Naive thymus-derived CD4-positive, alpha-beta T cell (primary cell): ENCODE measurements at regions of chr11 and their contacts with region 1.

Region 1: GRCh38 chr11:126062679-126063506 is at the start of gene CDON:
- DNase-seq: peak; percentile 88 to 97 (median 93)
- ATAC-seq: peak; percentile 92
- H3K4me3 ChIP-seq: peak within 1 kb of the TSS; percentile 83
- H3K4me3 Mint-ChIP-seq: peak within 1 kb of the TSS; percentile 79 to 93 (median 92)
- H3K27ac ChIP-seq: peak within 1 kb of the TSS; percentile 76
- H3K27ac Mint-ChIP-seq: peak within 1 kb of the TSS; percentile 79 to 98 (median 97)
- H3K4me1 ChIP-seq: peaks cover 4 to 5% of the 10 kb centered on the region in 2 donors
- H3K4me1 Mint-ChIP-seq: peaks cover 5 to 17% (median 7%) of the 10 kb centered on the region in 7 donors
- H3K27me3 ChIP-seq: no peaks in the 10 kb centered on the region
- H3K27me3 Mint-ChIP-seq: peaks cover 0 to 56% (median 5%) of the 10 kb centered on the region in 5 donors
- total RNA-seq, gene CDON: 1.5 to 4.8 (median 2.3) TPM

Region 2: DNA sequence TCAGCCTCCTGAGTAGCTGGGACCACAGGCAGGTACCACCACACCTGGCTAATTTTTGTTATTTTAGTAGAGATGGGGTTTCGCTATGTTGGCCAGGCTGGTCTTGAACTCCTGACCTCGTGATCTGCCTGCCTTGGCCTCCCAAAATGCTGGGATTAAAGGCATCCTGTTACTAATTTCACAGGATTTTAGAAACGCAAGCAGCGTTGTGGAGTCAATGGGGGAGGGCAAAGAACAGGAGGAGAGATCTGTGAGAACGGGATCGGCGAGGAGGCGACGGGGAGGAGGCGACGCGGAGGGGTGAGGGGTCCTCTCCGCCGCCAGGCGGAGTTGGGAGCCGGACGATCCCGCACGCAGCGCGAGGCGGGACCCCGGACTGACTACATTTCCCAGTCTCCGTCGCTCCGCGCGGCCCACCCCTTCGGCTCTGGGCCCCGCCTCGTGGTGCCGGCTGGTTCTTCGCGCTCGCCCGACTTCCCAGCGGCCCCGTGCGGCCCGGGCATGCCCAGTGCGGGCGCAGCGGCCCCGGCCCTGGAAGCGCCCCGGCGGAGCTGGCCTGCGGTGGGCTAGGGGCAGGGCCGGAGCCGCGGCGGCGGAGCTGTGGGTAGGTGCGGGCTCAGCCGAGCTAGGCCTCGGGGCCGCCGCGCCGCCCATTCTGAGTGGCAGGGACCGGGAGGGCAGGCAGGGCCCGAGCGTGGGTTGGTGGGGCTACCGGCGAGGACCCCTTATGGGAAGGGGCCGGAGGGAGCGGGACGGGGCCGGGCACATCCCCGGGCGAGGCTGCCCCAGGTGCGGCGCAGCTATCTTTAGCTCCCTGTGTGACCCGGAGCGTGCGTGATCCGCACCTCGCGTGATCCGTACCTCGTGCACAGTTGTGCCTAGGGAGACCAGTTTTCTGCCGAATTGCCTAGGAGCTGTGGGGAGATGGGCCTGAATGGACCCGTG is 493.7 kb before region 1 on chr11 and contains the start of gene EI24:
- CTCF ChIA-PET with region 1: no interaction called
- POLR2A ChIA-PET with region 1: no interaction called
- intact Hi-C with region 1: loop called in 1 of 2 experiments (anchors 1 kb)
- DNase-seq: peak; percentile 73 to 89 (median 81)
- ATAC-seq: peak; percentile 99
- H3K4me3 ChIP-seq: peak within 1 kb of the TSS; percentile 90
- H3K4me3 Mint-ChIP-seq: peak within 1 kb of the TSS; percentile 90 to 97 (median 94)
- H3K27ac ChIP-seq: peak within 1 kb of the TSS; percentile 90
- H3K27ac Mint-ChIP-seq: peak within 1 kb of the TSS; percentile 78 to 96 (median 91)
- H3K4me1 ChIP-seq: peaks cover 13 to 16% of the 10 kb centered on the region in 2 donors
- H3K4me1 Mint-ChIP-seq: peaks cover 12 to 38% (median 26%) of the 10 kb centered on the region in 7 donors
- H3K27me3 ChIP-seq: no peaks in the 10 kb centered on the region
- H3K27me3 Mint-ChIP-seq: no peaks in the 10 kb centered on the region
- total RNA-seq, gene EI24: 21.3 to 42.7 (median 35.7) TPM

Region 3: DNA sequence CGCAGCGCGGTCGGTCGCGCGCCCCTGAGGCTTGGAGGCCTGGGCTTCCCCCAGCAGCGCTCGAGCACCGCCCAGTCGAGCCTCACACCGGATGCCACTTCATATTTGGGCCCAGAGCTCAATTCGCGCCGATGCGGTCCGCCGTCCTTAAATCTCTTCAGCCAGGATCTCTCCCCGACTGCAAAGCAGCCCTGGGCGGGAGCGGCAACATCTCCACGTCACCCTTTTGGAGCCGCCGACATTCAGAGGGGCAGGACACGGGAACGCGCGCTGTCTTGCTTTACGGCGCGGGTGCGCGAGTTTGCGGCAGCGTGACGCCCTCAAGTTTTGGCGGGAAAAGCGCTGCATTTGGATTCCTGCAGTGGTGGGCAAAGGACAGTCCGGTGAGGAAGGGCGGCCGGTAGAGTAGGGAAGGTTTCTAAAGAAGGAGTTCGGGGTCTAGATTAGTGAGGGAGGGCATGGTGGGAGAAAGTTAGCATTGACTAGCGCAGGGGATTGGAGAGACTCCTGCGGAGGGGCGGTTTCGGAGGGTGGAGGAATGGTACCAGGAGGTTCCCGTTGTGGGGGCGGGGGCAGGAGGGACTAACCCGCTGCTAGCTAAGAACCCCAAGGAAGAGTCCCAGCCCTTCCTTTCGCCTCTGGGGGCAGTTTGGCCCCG is 437.1 kb before region 1 on chr11:
- CTCF ChIA-PET with region 1: no interaction called
- POLR2A ChIA-PET with region 1: no interaction called
- intact Hi-C with region 1: loop called (anchors 1 kb)
- DNase-seq: peak; percentile 70 to 87 (median 82)
- ATAC-seq: peak; percentile 95
- H3K4me3 ChIP-seq: peak overlapping the region; percentile 91
- H3K4me3 Mint-ChIP-seq: peak overlapping the region; percentile 82 to 99 (median 98)
- H3K27ac ChIP-seq: peak overlapping the region; percentile 96
- H3K27ac Mint-ChIP-seq: peak overlapping the region; percentile 64 to 99 (median 98)
- H3K4me1 ChIP-seq: peaks cover 0 to 5% of the 10 kb centered on the region in 2 donors
- H3K4me1 Mint-ChIP-seq: peaks cover 13 to 47% (median 15%) of the 10 kb centered on the region in 7 donors
- H3K27me3 ChIP-seq: no peaks in the 10 kb centered on the region
- H3K27me3 Mint-ChIP-seq: no peaks in the 10 kb centered on the region

Region 4: DNA sequence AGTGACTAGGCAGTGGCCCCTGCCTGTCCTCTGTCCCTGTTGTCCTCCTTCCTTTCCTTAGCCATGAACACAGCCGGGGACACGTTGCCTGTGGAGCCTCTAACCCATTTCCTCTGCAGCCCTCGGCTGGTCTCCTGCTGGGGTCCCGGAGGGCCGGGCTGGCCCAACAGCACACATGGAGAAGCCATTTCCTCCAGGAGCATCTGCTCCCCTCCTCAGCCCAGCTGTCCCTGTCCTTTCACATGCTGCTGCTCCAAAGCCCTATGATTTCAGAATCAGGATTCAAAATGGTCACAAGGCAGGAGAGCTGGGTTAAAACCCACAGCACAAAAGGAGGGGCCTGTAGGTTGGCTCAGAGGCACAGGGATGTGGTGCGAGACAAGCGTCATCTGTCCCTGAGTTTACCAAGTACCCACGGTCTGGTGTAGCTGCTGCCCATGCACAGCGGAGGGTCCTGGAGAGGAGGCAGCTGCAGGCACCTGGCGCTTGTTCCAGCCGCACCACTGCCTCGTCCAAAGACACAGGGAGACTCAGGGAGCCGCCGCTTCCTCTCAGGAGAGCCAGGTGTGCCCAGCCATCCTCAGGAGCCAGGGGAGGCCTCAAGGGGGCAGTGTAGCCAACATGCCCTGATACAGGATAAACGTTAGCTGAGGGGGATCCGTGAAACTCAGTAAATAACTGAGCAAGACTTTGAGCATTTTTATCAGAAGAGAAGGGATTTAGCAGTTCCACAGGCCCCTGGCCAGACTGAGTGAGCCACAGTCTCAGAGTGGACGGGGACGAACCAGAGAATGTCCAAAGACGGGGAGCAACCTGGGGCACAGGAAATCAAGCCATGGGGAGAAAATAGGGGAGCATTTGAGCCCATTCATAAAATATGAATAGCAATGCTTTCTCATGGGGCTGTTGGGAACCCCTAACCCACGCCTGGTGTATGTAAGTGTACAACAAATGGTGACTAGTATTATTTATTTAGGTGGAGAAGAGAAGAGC is 121.0 kb before region 1 on chr11:
- CTCF ChIA-PET with region 1: no interaction called
- POLR2A ChIA-PET with region 1: no interaction called
- intact Hi-C with region 1: loop called in 1 of 2 experiments (anchors 1 kb)
- DNase-seq: peak in 7 of 9 donors; percentile 8 to 49 (median 37)
- ATAC-seq: peak; percentile 65
- H3K4me3 ChIP-seq: no peak overlapping the region
- H3K4me3 Mint-ChIP-seq: peak overlapping the region in 6 of 10 donors; percentile 28 to 63 (median 40)
- H3K27ac ChIP-seq: no peak overlapping the region
- H3K27ac Mint-ChIP-seq: peak overlapping the region in 1 of 9 donors; percentile 18
- H3K4me1 ChIP-seq: no peaks in the 10 kb centered on the region
- H3K4me1 Mint-ChIP-seq: peaks cover 7 to 21% (median 16%) of the 10 kb centered on the region in 7 donors
- H3K27me3 ChIP-seq: no peaks in the 10 kb centered on the region
- H3K27me3 Mint-ChIP-seq: no peaks in the 10 kb centered on the region

Region 5: GRCh38 chr11:126172596-126173038 is 109.7 kb after region 1 on chr11:
- CTCF ChIA-PET with region 1: no interaction called
- POLR2A ChIA-PET with region 1: no interaction called
- intact Hi-C with region 1: no loop called
- DNase-seq: no peak
- ATAC-seq: no peak
- H3K4me3 ChIP-seq: no peak overlapping the region
- H3K4me3 Mint-ChIP-seq: no peak overlapping the region
- H3K27ac ChIP-seq: no peak overlapping the region
- H3K27ac Mint-ChIP-seq: peak overlapping the region in 1 of 9 donors; percentile 36
- H3K4me1 ChIP-seq: no peaks in the 10 kb centered on the region
- H3K4me1 Mint-ChIP-seq: peaks cover 0 to 3% (median 0%) of the 10 kb centered on the region in 7 donors
- H3K27me3 ChIP-seq: no peaks in the 10 kb centered on the region
- H3K27me3 Mint-ChIP-seq: peaks cover 0 to 20% (median 4%) of the 10 kb centered on the region in 5 donors

Region 6: GRCh38 chr11:126282736-126283591 is 220.1 kb after region 1 on chr11 and contains the start of gene TIRAP:
- CTCF ChIA-PET with region 1: no interaction called
- POLR2A ChIA-PET with region 1: no interaction called
- intact Hi-C with region 1: loop called (anchors 5 kb)
- DNase-seq: peak; percentile 55 to 77 (median 75)
- ATAC-seq: peak; percentile 79
- H3K4me3 ChIP-seq: peak within 1 kb of the TSS; percentile 77
- H3K4me3 Mint-ChIP-seq: peak within 1 kb of the TSS; percentile 88 to 100 (median 98)
- H3K27ac ChIP-seq: peak within 1 kb of the TSS; percentile 86
- H3K27ac Mint-ChIP-seq: peak within 1 kb of the TSS; percentile 93 to 99 (median 97)
- H3K4me1 ChIP-seq: peaks cover 16 to 28% of the 10 kb centered on the region in 2 donors
- H3K4me1 Mint-ChIP-seq: peaks cover 35 to 62% (median 55%) of the 10 kb centered on the region in 7 donors
- H3K27me3 ChIP-seq: no peaks in the 10 kb centered on the region
- H3K27me3 Mint-ChIP-seq: no peaks in the 10 kb centered on the region
- total RNA-seq, gene TIRAP: 12.9 to 21.5 (median 17.9) TPM